ENCODE measurements at regions of chr5 and their contacts with region 1.

Region 1: GRCh38 chr5:71601222-71602041 is 14.3 kb downstream of the MCCC2 start:
- DNase-seq: peak; percentile 27 to 81 (median 53)
- ATAC-seq: peak; percentile 93 to 94 (median 94)
- H3K4me3 ChIP-seq: no peak overlapping the region
- H3K4me3 Mint-ChIP-seq: peak overlapping the region in 1 of 3 donors; percentile 49
- H3K27ac ChIP-seq: peak overlapping the region; percentile 69
- H3K27ac Mint-ChIP-seq: peak overlapping the region; percentile 89 to 93
- H3K4me1 ChIP-seq: peaks cover 0 to 16% of the 10 kb centered on the region in 2 experiments
- H3K4me1 Mint-ChIP-seq: peaks cover 15 to 33% (median 32%) of the 10 kb centered on the region in 3 donors
- H3K27me3 ChIP-seq: no peaks in the 10 kb centered on the region
- H3K27me3 Mint-ChIP-seq: no peaks in the 10 kb centered on the region

Region 2: DNA sequence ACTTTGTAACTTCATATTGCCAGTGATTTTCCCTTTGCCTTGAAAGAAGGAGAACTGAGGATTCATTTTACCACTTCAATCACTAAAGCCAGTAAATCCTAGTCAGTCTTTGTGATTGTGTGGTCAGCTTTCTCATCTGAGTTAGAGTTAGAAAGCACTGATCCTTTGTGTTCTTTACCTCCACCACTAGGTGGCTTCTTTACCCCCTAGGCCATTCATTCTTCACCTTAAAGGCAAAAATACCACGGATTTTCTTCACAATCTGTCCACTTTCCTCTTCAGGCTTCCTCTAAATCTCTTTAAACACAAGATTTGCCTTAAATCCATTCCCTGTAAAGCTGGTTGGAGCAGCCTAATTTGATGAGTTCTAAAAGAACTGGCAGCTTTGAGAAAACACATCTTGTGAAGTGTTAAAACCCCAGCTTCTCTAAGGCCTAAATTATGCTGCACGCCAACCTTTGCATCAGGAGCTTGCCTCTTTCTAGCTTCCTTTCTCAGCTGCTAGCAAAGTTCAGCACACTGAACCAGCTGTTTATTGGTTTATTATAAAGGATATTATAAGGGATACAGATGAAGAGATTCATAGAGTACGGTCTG is 125.5 kb before region 1 on chr5:
- CTCF ChIA-PET with region 1: interaction called, 8 to 11 read pairs
- POLR2A ChIA-PET with region 1: interaction called in 1 of 2 experiments, 3 read pairs
- DNase-seq: peak in 1 of 35 experiments; percentile 29
- ATAC-seq: peak in 2 of 4 experiments; percentile 43 to 45
- H3K4me3 ChIP-seq: no peak overlapping the region
- H3K4me3 Mint-ChIP-seq: no peak overlapping the region
- H3K27ac ChIP-seq: no peak overlapping the region
- H3K27ac Mint-ChIP-seq: peak overlapping the region in 1 of 2 donors; percentile 34
- H3K4me1 ChIP-seq: no peaks in the 10 kb centered on the region
- H3K4me1 Mint-ChIP-seq: peaks cover 0 to 1% (median 0%) of the 10 kb centered on the region in 3 donors
- H3K27me3 ChIP-seq: no peaks in the 10 kb centered on the region
- H3K27me3 Mint-ChIP-seq: no peaks in the 10 kb centered on the region

Region 3: DNA sequence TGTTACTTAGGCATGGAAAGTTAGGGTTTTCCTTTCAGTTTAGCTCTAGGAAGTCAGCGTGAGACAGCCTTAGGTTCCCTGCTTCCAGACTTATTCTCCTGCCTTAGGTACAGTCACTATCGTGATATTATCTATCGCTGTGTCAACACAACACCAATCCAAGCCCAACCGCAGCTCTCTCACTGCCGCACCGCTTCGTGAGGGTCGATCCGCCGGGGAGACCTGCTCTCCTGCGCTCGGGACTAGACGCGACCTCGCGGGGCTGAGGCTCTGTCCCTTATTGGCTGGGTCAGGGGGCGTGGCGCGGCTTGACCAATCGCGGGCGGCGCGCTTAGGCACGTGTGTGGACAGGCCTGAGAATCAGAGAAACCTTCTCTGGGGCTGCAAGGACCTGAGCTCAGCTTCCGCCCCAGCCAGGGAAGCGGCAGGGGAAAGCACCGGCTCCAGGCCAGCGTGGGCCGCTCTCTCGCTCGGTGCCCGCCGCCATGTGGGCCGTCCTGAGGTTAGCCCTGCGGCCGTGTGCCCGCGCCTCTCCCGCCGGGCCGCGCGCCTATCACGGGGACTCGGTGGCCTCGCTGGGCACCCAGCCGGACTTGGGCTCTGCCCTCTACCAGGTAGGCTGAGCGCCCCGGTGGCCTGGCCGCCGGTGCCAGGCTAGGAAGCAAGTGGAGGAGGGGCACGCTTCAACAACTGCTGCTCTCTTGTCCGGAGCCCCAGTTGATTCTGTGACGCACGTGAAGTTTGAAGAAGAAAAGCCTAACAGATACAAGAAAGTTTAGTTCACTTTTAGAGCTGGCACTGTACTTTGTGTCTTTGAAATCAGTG is 14.3 kb before region 1 on chr5 and contains the start of gene MCCC2:
- CTCF ChIA-PET with region 1: interaction called, 4 to 32 read pairs
- POLR2A ChIA-PET with region 1: interaction called in 1 of 2 experiments, 4 read pairs
- DNase-seq: peak; percentile 89 to 97 (median 96)
- ATAC-seq: peak; percentile 97 to 100 (median 99)
- H3K4me3 ChIP-seq: peak within 1 kb of the TSS; percentile 88
- H3K4me3 Mint-ChIP-seq: peak within 1 kb of the TSS; percentile 84 to 96 (median 90)
- H3K27ac ChIP-seq: peak within 1 kb of the TSS; percentile 94
- H3K27ac Mint-ChIP-seq: peak within 1 kb of the TSS; percentile 97 to 99
- H3K4me1 ChIP-seq: peaks cover 10 to 32% of the 10 kb centered on the region in 2 experiments
- H3K4me1 Mint-ChIP-seq: peaks cover 36 to 42% (median 42%) of the 10 kb centered on the region in 3 donors
- H3K27me3 ChIP-seq: no peaks in the 10 kb centered on the region
- H3K27me3 Mint-ChIP-seq: no peaks in the 10 kb centered on the region
- total RNA-seq, gene MCCC2: 27.2 to 32.8 (median 27.5) TPM

Region 4: GRCh38 chr5:71623221-71623794 is 21.9 kb after region 1 on chr5:
- CTCF ChIA-PET with region 1: interaction called, 5 to 10 read pairs
- POLR2A ChIA-PET with region 1: no interaction called
- DNase-seq: no peak
- ATAC-seq: no peak
- H3K4me3 ChIP-seq: no peak overlapping the region
- H3K4me3 Mint-ChIP-seq: no peak overlapping the region
- H3K27ac ChIP-seq: no peak overlapping the region
- H3K27ac Mint-ChIP-seq: no peak overlapping the region
- H3K4me1 ChIP-seq: no peaks in the 10 kb centered on the region
- H3K4me1 Mint-ChIP-seq: peaks cover 11 to 17% (median 14%) of the 10 kb centered on the region in 3 donors
- H3K27me3 ChIP-seq: no peaks in the 10 kb centered on the region
- H3K27me3 Mint-ChIP-seq: no peaks in the 10 kb centered on the region